ENCODE measurements at regions of chr1 and their contacts with region 1.

Region 1: DNA sequence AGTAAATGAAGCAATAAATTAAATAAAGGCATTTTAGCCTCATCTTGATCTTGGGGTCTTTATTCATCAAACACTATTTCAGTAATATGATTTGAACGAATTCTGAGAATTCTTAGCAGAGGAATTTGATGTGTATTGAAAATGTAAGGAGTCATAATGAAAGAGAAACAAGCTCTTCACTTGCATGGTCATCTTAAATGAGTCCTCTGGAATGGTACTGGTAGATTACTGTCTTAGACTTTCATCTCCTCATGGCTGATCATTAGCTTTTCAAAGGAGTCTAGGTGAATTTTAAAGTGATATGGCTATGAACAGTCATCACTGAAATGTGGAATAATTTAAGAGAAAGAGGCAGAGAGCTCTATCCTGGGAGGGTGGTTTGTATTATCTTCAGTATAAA is 30.0 kb downstream of the PRRC2C start:
- DNase-seq: no peak
- H3K4me3 ChIP-seq: no peak overlapping the region
- H3K27ac ChIP-seq: no peak overlapping the region
- H3K4me1 ChIP-seq: peaks cover 1% of the 10 kb centered on the region
- H3K27me3 ChIP-seq: no peaks in the 10 kb centered on the region
- CTCF ChIP-seq: no peak
- EP300 ChIP-seq: no peak
- POLR2A ChIP-seq: no peak

Region 2: GRCh38 chr1:171138980-171139379 is 376.3 kb before region 1 on chr1:
- intact Hi-C with region 1: no loop called
- DNase-seq: no peak
- H3K4me3 ChIP-seq: no peak overlapping the region
- H3K27ac ChIP-seq: no peak overlapping the region
- H3K4me1 ChIP-seq: peaks cover 7% of the 10 kb centered on the region
- H3K27me3 ChIP-seq: no peaks in the 10 kb centered on the region
- CTCF ChIP-seq: no peak
- EP300 ChIP-seq: no peak
- POLR2A ChIP-seq: no peak

Region 3: DNA sequence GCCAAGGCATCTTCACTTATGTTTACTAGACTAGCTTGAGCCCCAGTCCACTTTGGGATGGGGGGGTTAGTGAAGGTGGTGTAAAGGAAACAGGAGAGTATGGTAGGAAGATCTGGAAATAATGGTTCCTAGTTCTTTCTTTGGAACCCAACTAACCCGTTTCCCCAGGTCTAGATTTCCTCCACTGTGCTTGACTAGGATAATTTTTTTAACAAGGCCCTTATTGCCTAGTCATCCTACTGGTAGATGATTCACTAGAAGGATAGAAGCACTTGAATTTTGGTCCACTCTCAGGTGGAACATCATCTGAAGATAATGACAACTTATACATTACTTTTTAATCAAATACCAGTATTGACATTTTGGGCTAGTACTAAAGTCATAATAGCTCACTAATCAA is 60.8 kb after region 1 on chr1:
- intact Hi-C with region 1: loop called in 1 of 4 experiments (anchors 10 kb)
- DNase-seq: no peak
- H3K4me3 ChIP-seq: no peak overlapping the region
- H3K27ac ChIP-seq: no peak overlapping the region
- H3K4me1 ChIP-seq: no peaks in the 10 kb centered on the region
- H3K27me3 ChIP-seq: no peaks in the 10 kb centered on the region
- CTCF ChIP-seq: no peak
- EP300 ChIP-seq: no peak
- POLR2A ChIP-seq: no peak